ENCODE measurements at regions of chr4 and their contacts with region 1.

Region 1: DNA sequence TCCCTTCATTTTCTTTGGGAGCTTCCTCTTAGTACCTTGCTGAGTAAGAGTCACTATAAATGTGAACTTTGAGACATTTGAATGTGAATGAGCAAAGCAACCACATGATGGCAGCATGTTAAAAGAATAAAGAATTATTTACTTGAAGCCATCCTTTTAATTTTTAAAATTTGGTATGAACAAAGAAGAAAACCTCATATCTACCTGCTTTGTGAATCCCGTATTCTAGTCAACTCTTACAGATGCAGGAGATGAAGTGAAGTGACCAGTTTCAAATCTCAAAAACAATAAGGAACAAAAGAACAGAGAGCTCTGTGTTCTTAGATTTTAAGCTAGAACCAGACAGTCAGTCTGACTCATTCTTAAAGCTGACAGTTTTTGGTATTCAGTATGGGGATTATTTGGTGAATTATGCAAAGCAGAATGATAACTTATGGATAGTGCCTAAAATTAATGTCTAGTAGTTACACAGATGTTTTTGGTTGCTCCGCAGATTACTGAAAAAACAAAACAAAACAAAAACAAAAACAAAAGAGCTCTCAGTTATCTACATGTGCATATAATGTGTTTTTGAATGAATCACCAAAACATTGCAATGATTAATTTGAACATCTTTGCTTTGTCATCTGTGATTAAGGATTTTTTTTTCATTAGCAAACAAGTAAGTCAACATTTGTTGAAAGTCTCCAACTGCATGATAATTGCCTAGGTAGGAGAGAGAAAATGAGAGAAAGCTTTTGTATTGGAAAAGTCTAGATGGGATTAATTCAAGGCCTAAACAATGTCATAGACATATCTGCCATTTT is 48.2 kb upstream of the H2AZ1 start:
- H3K4me3 Mint-ChIP-seq: no peak overlapping the region
- H3K27ac Mint-ChIP-seq: no peak overlapping the region
- H3K4me1 Mint-ChIP-seq: no peaks in the 10 kb centered on the region
- H3K27me3 Mint-ChIP-seq: no peaks in the 10 kb centered on the region

Region 2: DNA sequence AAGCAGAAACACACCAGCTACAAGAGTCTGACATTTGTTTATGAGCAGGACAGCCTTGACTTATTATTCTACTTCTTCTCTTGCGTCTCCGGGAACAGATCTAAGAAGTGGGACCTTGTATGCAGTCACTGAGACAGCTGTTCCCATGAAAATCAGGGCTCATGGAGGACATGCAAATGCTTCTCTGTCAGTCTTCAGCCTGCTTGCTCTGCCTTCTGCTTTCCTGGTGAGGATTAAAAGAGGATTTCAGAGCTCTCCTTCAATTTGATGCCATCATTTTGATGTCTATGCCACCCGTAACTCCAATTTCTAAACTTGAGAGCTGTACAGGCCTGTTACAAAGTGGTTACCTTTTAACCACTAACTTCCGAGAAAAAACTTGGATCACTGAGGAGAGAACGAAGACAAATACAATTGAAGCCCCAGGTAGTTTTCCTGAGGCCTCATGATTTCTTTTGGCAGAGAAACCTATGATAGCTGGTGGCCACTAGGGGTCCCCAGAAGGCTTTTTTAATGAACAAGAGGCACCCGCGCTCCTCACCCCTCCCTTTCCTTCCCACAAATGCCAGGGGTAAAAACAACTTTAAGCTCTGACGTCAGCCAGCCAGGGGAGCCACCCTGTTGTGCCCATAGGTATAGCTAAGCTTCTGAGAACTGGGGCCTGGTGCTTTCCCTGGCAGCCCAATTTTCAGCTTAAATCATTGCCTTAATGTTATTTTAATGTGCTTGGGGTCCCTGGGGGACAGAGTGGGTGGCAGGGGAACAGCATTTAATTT is 95.0 kb after region 1 on chr4:
- intact Hi-C with region 1: loop called (anchors 5 kb)
- H3K4me3 Mint-ChIP-seq: no peak overlapping the region
- H3K27ac Mint-ChIP-seq: no peak overlapping the region
- H3K4me1 Mint-ChIP-seq: peaks cover 6% of the 10 kb centered on the region
- H3K27me3 Mint-ChIP-seq: peaks cover 1% of the 10 kb centered on the region

Region 3: GRCh38 chr4:100340512-100341485 is 342.5 kb after region 1 on chr4:
- intact Hi-C with region 1: no loop called
- H3K4me3 Mint-ChIP-seq: no peak overlapping the region
- H3K27ac Mint-ChIP-seq: no peak overlapping the region
- H3K4me1 Mint-ChIP-seq: peaks cover 15% of the 10 kb centered on the region
- H3K27me3 Mint-ChIP-seq: no peaks in the 10 kb centered on the region

Measured in dendritic cell treated with granulocyte-macrophage colony-stimulating factor and Interleukin-4, amounts not matched to agents 40 ng/mL and 50 ng/mL, for 4 days (primary cell).